AG04449 (cell line): ENCODE measurements at regions of chr10 and their contacts with region 1.

Region 1: DNA sequence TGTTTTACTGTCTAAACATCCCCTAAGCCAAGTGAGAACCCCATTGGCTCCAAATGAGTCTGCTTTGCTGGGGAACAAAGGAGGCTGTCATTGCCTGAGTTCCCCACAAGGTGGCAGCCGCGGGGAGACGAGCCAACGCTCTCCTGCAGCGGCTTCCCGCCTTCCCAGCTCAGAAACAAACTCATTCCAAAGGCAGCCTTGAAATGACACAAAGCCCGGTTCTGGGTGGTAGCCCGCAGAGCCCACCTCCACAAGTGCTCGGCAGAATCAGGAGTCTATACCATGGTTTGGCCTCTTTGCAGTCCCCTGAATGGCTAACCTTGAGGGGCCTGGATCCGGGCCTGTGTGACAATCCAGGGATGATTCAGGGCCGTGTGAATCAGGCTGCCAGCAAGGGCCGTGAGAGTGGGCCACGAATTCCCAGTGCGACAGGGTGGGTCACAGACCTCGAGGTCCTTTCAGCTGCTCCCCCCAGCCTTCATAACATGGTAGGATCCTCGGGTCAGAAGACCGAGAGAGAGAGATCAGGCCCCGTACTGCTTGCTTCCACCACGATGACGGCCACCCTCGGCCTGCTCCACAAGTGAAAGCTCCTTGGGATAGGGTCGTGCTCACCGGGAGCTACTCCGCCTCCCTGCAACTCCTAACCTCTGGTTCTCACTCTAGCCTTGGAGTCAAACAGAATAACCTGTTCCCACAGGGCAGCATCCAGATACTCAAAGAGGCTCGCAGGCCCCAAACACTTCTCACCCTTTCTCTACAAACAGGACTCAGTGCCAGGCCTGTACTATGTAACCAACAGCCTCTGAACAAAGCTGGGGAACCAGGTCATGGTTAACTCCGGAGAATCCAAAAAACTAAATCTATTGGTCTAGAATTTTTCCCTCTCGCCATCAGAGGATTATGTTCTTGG is 79.6 kb downstream of the DLG5 start:
- DNase-seq: no peak
- H3K4me3 ChIP-seq: no peak overlapping the region
- CTCF ChIP-seq: peak; percentile 96

Region 2: GRCh38 chr10:77857254-77857653 is 10.3 kb after region 1 on chr10:
- CTCF ChIA-PET with region 1: interaction called, 53 read pairs
- POLR2A ChIA-PET with region 1: no interaction called
- DNase-seq: no peak
- H3K4me3 ChIP-seq: no peak overlapping the region
- CTCF ChIP-seq: no peak

Region 3: DNA sequence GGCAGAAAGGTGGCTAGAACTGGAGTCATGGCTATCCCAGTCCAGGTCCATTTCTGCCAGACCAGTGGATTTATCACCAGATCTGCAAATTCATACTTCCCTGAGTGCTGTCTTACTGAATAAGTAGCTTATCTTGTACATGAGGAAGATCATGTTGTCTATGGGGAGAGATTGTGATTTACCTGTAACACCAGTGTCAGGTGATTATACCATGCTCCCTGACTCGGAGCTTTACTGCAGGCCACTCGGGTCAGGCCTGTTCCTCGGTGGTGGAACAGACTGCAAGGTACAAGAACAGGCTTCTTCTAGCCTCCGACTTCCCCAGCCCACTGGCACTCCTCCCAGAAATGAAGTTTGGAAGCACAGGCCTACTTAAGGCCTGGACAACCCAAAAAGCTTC is 122.1 kb after region 1 on chr10:
- CTCF ChIA-PET with region 1: interaction called, 37 read pairs
- POLR2A ChIA-PET with region 1: no interaction called
- DNase-seq: no peak
- H3K4me3 ChIP-seq: no peak overlapping the region
- CTCF ChIP-seq: no peak

Region 4: DNA sequence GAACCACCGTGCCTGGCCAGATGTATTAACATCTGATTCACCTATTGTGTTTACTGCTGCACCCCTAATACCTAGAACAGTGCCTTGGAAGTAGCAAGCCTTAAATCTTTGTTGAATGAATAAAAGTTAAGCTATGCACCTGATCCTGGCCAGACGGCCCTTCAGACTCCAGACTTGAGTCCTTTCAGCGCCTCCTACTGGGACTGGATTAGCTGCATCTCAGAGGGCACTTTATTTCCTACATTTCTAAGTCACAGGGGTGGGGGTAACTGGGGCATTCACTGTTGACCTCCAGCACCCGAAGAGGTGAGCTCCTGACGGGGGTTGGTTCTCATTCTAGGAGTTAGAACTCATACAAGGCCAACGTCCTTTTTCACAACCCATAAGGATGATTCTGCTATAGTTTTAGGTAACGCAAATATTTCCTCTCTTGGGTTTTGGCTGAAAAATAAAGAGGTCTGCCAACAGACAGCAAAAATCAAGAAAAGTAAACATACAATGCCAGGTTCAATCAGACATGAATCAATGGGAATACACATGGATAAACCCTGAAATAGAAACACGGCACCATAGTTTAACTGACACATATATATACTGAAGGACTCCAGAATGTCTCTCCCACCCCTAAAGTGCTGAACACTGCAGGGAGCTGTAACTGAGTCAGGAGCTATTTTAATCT is 127.6 kb after region 1 on chr10:
- CTCF ChIA-PET with region 1: interaction called, 37 read pairs
- POLR2A ChIA-PET with region 1: no interaction called
- DNase-seq: no peak
- H3K4me3 ChIP-seq: no peak overlapping the region
- CTCF ChIP-seq: peak; percentile 46

Region 5: GRCh38 chr10:77983384-77984341 is 136.7 kb after region 1 on chr10:
- CTCF ChIA-PET with region 1: interaction called, 21 read pairs
- POLR2A ChIA-PET with region 1: no interaction called
- DNase-seq: peak; percentile 26
- H3K4me3 ChIP-seq: no peak overlapping the region
- CTCF ChIP-seq: no peak

Region 6: GRCh38 chr10:78029269-78030226 is 182.6 kb after region 1 on chr10 and contains the start of gene POLR3A:
- CTCF ChIA-PET with region 1: interaction called, 18 read pairs
- POLR2A ChIA-PET with region 1: no interaction called
- DNase-seq: peak; percentile 95
- H3K4me3 ChIP-seq: peak within 1 kb of the TSS; percentile 100
- CTCF ChIP-seq: peak; percentile 54

Region 7: DNA sequence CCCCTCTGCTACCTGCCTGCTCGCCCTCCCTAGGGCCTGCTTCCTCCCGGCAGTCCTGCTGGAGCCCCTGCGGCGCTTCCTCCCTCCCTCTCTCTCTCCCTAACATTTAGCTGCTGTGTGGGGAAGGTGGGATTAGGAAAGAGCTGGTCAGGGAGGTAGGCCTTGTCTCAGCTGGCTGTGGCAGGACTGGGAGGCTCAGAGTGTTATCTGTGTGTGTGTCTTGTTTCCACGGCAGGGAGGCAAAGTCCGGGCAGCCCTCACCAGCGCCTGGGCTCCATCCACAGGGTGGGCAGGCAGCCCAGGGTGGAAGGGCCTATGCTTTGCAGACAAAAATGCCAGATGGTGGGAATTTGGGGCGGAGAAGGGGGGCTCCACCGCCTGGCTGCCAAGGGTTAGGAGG is 292.4 kb after region 1 on chr10:
- CTCF ChIA-PET with region 1: no interaction called
- POLR2A ChIA-PET with region 1: no interaction called
- DNase-seq: no peak
- H3K4me3 ChIP-seq: no peak overlapping the region
- CTCF ChIP-seq: no peak